ENCODE measurements at regions of chr12 and their contacts with region 1.

Region 1: DNA sequence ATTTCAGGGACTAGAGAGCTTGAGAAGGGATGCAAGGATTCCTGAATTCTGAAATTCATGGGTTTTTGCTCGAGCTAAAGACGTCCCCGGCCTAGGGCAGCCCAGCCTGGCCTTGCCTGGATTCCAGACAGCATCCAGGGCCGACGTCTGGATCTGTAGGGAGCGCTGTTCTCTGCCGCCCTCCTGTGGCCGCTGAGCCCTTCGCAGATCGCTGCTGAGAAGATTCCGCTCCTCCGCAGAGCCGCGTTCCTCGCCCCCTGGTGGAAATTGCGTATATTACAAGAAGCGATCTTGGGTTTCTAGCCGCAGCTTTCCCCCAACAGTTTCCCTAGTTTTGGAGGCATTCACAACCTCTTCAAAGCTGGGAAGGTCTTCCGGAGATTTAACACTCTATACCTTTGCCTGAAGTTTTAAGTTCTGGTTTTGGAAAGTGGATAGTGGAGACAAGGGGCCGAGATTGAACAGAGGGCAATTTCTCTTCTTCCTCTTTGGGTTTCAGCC is 5.1 kb downstream of the CISTR start:
- DNase-seq: peak; percentile 87
- ATAC-seq: peak; percentile 96
- H3K4me3 ChIP-seq: no peak overlapping the region
- H3K27ac ChIP-seq: no peak overlapping the region
- H3K4me1 ChIP-seq: peaks cover 4% of the 10 kb centered on the region; the same call in 1 of the 2 replicates
- H3K27me3 ChIP-seq: peaks cover 70% of the 10 kb centered on the region
- CTCF ChIP-seq: peak; percentile 100; the same call in 1 of the 2 replicates
- POLR2A ChIP-seq: 0 out of 2 replicates have a peak, but pooled peaks have one; percentile 39
- RAD21 ChIP-seq: peak; percentile 93

Region 2: GRCh38 chr12:53543539-53543938 is 203.1 kb before region 1 on chr12:
- CTCF ChIA-PET with region 1: no interaction called
- POLR2A ChIA-PET with region 1: no interaction called
- dilution Hi-C with region 1: no loop called
- in situ Hi-C with region 1: loop called (anchors 10 kb)
- intact Hi-C with region 1: loop called (anchors 1 kb)
- DNase-seq: peak; percentile 73
- ATAC-seq: peak; percentile 96
- H3K4me3 ChIP-seq: no peak overlapping the region
- H3K27ac ChIP-seq: no peak overlapping the region
- H3K4me1 ChIP-seq: no peaks in the 10 kb centered on the region
- H3K27me3 ChIP-seq: no peaks in the 10 kb centered on the region
- CTCF ChIP-seq: peak; percentile 96
- POLR2A ChIP-seq: no peak
- RAD21 ChIP-seq: peak; percentile 76

Region 3: GRCh38 chr12:53712059-53712643 is 34.5 kb before region 1 on chr12:
- CTCF ChIA-PET with region 1: interaction called, 10 read pairs
- POLR2A ChIA-PET with region 1: no interaction called
- dilution Hi-C with region 1: no loop called
- in situ Hi-C with region 1: no loop called
- intact Hi-C with region 1: no loop called
- DNase-seq: no peak
- ATAC-seq: no peak
- H3K4me3 ChIP-seq: no peak overlapping the region
- H3K27ac ChIP-seq: no peak overlapping the region
- H3K4me1 ChIP-seq: no peaks in the 10 kb centered on the region
- H3K27me3 ChIP-seq: peaks cover under 1% of the 10 kb centered on the region; the same call in 1 of the 2 replicates
- CTCF ChIP-seq: no peak
- POLR2A ChIP-seq: no peak
- RAD21 ChIP-seq: no peak

Region 4: DNA sequence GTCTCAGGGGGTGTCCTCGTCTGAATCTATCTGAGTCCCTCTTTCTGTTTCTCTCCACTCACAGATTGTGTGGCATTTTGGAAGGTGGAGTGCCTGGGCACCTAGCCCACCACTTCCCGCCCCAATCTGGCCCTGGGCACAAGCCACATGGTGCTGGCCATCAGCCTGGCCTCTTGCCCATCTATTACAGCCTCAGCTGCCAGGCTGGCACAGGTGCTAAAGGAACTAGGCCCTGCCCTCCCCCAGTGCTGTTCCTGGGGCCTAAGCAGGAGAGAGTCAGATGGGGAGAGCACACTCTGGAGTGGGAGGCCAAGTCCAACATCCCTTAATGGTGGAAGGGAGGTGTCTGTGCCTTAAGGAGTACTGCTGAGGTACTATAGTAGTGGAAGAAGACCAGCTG is 11.1 kb before region 1 on chr12:
- CTCF ChIA-PET with region 1: interaction called, 11 read pairs
- POLR2A ChIA-PET with region 1: no interaction called
- dilution Hi-C with region 1: no loop called
- in situ Hi-C with region 1: no loop called
- intact Hi-C with region 1: no loop called
- DNase-seq: no peak
- ATAC-seq: no peak
- H3K4me3 ChIP-seq: no peak overlapping the region
- H3K27ac ChIP-seq: no peak overlapping the region
- H3K4me1 ChIP-seq: no peaks in the 10 kb centered on the region
- H3K27me3 ChIP-seq: peaks cover 68% of the 10 kb centered on the region
- CTCF ChIP-seq: no peak
- POLR2A ChIP-seq: no peak
- RAD21 ChIP-seq: no peak

Region 5: GRCh38 chr12:53764615-53765014 is 18.0 kb after region 1 on chr12:
- CTCF ChIA-PET with region 1: interaction called, 11 read pairs
- POLR2A ChIA-PET with region 1: no interaction called
- dilution Hi-C with region 1: no loop called
- in situ Hi-C with region 1: no loop called
- intact Hi-C with region 1: no loop called
- DNase-seq: no peak
- ATAC-seq: no peak
- H3K4me3 ChIP-seq: no peak overlapping the region
- H3K27ac ChIP-seq: no peak overlapping the region
- H3K4me1 ChIP-seq: peaks cover 5% of the 10 kb centered on the region
- H3K27me3 ChIP-seq: peaks cover 22% of the 10 kb centered on the region
- CTCF ChIP-seq: no peak
- POLR2A ChIP-seq: no peak
- RAD21 ChIP-seq: no peak

Region 6: GRCh38 chr12:54214553-54215406 is 468.1 kb after region 1 on chr12:
- CTCF ChIA-PET with region 1: no interaction called
- POLR2A ChIA-PET with region 1: no interaction called
- dilution Hi-C with region 1: no loop called
- in situ Hi-C with region 1: no loop called
- intact Hi-C with region 1: loop called (anchors 5 kb)
- DNase-seq: peak; percentile 85
- ATAC-seq: peak; percentile 93
- H3K4me3 ChIP-seq: peak overlapping the region; percentile 15; the same call in 1 of the 2 replicates
- H3K27ac ChIP-seq: no peak overlapping the region
- H3K4me1 ChIP-seq: peaks cover 5% of the 10 kb centered on the region; the same call in 1 of the 2 replicates
- H3K27me3 ChIP-seq: peaks cover 36% of the 10 kb centered on the region
- CTCF ChIP-seq: peak; percentile 100; the same call in 1 of the 2 replicates
- POLR2A ChIP-seq: no peak
- RAD21 ChIP-seq: peak; percentile 60